CD8-positive, alpha-beta T cell (primary cell): ENCODE measurements at regions of chr3 and their contacts with region 1.

Region 1: GRCh38 chr3:122609798-122610559 is 32.5 kb downstream of the PARP15 start:
- DNase-seq: peak in 2 of 9 experiments; percentile 27 to 33
- ATAC-seq: peak; percentile 49
- H3K4me3 ChIP-seq: no peak overlapping the region
- H3K4me3 Mint-ChIP-seq: peak overlapping the region; percentile 17
- H3K27ac ChIP-seq: peak overlapping the region in 1 of 2 experiments; percentile 40
- H3K27ac Mint-ChIP-seq: peak overlapping the region; percentile 74
- H3K4me1 ChIP-seq: no peaks in the 10 kb centered on the region
- H3K4me1 Mint-ChIP-seq: peaks cover 6% of the 10 kb centered on the region
- H3K27me3 ChIP-seq: no peaks in the 10 kb centered on the region
- H3K27me3 Mint-ChIP-seq: no peaks in the 10 kb centered on the region
- CTCF ChIP-seq: no peak

Region 2: GRCh38 chr3:122572940-122573412 is 37.0 kb before region 1 on chr3:
- CTCF ChIA-PET with region 1: no interaction called
- POLR2A ChIA-PET with region 1: no interaction called
- intact Hi-C with region 1: loop called in 1 of 2 experiments (anchors 5 kb)
- DNase-seq: peak in 6 of 9 experiments; percentile 19 to 68 (median 46)
- ATAC-seq: peak; percentile 62
- H3K4me3 ChIP-seq: no peak overlapping the region
- H3K4me3 Mint-ChIP-seq: no peak overlapping the region
- H3K27ac ChIP-seq: peak overlapping the region in 1 of 2 experiments; percentile 68
- H3K27ac Mint-ChIP-seq: peak overlapping the region; percentile 37
- H3K4me1 ChIP-seq: peaks cover 12% of the 10 kb centered on the region
- H3K4me1 Mint-ChIP-seq: peaks cover 53% of the 10 kb centered on the region
- H3K27me3 ChIP-seq: no peaks in the 10 kb centered on the region
- H3K27me3 Mint-ChIP-seq: no peaks in the 10 kb centered on the region
- CTCF ChIP-seq: no peak

Region 3: GRCh38 chr3:122589297-122589696 is 20.7 kb before region 1 on chr3:
- CTCF ChIA-PET with region 1: no interaction called
- POLR2A ChIA-PET with region 1: no interaction called
- intact Hi-C with region 1: no loop called
- DNase-seq: no peak
- ATAC-seq: no peak
- H3K4me3 ChIP-seq: no peak overlapping the region
- H3K4me3 Mint-ChIP-seq: no peak overlapping the region
- H3K27ac ChIP-seq: no peak overlapping the region
- H3K27ac Mint-ChIP-seq: no peak overlapping the region
- H3K4me1 ChIP-seq: no peaks in the 10 kb centered on the region
- H3K4me1 Mint-ChIP-seq: peaks cover 23% of the 10 kb centered on the region
- H3K27me3 ChIP-seq: no peaks in the 10 kb centered on the region
- H3K27me3 Mint-ChIP-seq: no peaks in the 10 kb centered on the region
- CTCF ChIP-seq: no peak